CD14-positive monocyte (primary cell): ENCODE measurements at regions of chr10 and their contacts with region 1.

Region 1: DNA sequence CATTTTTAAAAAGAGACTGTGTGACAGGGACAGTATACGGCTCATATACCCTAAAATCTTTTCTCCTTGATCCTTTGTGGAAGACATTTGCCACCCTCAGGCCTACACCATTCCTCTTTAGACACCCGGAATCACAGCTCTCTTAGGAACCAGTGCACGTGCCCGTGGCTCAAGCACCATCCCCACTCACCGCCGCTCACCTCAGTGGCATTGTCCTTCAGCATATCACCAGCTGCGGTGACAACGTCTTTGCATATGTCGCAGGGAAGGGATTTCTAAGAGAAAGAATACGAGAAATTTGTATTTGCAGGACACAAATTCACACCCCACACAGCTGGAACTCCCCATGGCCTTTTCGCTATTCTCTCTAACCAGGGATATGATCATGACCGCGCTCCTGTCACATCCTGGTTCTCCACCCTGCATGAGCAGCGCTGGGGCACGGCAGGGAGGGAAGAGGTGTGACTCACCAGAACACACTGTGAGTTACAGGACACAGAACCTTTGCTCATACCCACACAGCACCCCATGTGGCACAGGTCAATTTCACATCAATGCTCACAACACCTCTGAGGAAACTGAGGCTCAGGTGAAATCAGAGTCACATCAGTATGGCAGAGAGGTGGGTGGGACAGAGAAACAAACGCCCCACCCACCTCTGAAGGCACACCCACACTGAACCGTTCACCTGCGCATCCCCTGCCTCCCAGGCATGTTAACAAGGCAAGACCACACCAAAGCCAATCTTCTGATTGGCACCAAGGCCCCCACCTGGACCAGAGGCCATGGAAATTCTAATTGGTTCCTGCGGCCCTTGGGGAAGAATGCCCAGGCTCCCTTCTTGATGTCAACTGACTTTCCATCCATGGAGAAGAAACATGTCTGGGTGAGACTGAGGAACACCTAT is 19.2 kb downstream of the PSAP start:
- DNase-seq: peak in 2 of 3 donors; percentile 25 to 76
- H3K4me3 ChIP-seq: no peak overlapping the region
- H3K4me3 Mint-ChIP-seq: no peak overlapping the region
- H3K27ac ChIP-seq: peak overlapping the region; percentile 14 to 86
- H3K27ac Mint-ChIP-seq: peak overlapping the region; percentile 84 to 97 (median 90)
- H3K4me1 ChIP-seq: peaks cover 84 to 95% of the 10 kb centered on the region in 2 donors
- H3K4me1 Mint-ChIP-seq: peaks cover 81% of the 10 kb centered on the region
- H3K27me3 ChIP-seq: no peaks in the 10 kb centered on the region
- H3K27me3 Mint-ChIP-seq: peaks cover 0 to 1% (median 0%) of the 10 kb centered on the region in 3 donors
- CTCF ChIP-seq: no peak

Region 2: GRCh38 chr10:71893920-71894319 is 62.0 kb after region 1 on chr10:
- intact Hi-C with region 1: loop called in 1 of 2 experiments (anchors 5 kb)
- DNase-seq: no peak
- H3K4me3 ChIP-seq: no peak overlapping the region
- H3K4me3 Mint-ChIP-seq: no peak overlapping the region
- H3K27ac ChIP-seq: no peak overlapping the region
- H3K27ac Mint-ChIP-seq: peak overlapping the region in 6 of 7 donors; percentile 35 to 100 (median 80)
- H3K4me1 ChIP-seq: peaks cover 77% of the 10 kb centered on the region in 2 donors
- H3K4me1 Mint-ChIP-seq: peaks cover 69% of the 10 kb centered on the region
- H3K27me3 ChIP-seq: no peaks in the 10 kb centered on the region
- H3K27me3 Mint-ChIP-seq: peaks cover 0 to 9% (median 0%) of the 10 kb centered on the region in 3 donors
- CTCF ChIP-seq: no peak